ENCODE measurements at regions of chr16 and their contacts with region 1.

Region 1: GRCh38 chr16:84065536-84066132 is 23.0 kb upstream of the SLC38A8 start:
- DNase-seq: peak; percentile 62 to 70
- H3K4me3 ChIP-seq: no peak overlapping the region
- H3K4me3 Mint-ChIP-seq: no peak overlapping the region
- H3K27ac Mint-ChIP-seq: no peak overlapping the region
- H3K4me1 ChIP-seq: 0 out of 2 replicates have a peak, but pooled peaks cover 7% of the 10 kb centered on the region
- H3K4me1 Mint-ChIP-seq: no peaks in the 10 kb centered on the region
- H3K27me3 ChIP-seq: no peaks in the 10 kb centered on the region
- H3K27me3 Mint-ChIP-seq: no peaks in the 10 kb centered on the region
- CTCF ChIP-seq: peak; percentile 84 to 86

Region 2: DNA sequence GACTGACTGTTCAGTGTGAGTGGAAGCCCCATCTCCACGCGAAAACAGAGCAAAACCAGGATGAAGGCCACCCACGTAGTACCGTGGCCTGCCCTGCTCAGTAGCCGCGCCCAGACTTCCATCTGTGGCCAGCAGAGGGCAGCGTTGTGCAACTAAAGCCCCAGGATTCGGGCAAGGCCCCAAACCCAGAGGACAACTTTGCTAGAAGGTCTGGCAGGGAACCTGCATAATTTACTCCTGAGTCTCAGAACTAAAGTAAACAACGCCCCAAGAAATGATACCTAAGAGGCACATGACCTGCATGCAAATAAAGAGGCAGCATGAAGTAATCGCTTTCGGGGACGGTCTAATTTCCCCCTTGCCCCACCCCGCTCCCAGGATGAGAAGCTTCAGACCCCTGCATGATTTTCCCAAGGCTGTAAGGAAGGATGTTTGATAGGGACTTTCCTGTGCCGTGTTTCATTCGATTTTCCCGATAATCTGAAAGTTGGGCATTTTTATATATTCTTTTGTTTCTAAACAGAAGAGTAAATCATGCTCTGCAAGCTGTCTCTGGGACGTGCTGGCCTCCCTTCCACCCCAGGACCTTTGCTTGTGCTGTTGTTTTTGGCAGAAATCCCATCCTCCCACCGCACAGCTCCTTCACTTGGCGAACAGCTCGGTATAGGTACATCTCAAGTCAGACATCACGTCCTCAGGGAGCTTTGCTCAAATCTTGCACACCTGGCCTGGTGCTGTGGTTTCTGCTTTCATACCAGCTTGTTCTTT is 239.3 kb before region 1 on chr16:
- CTCF ChIA-PET with region 1: no interaction called
- POLR2A ChIA-PET with region 1: no interaction called
- intact Hi-C with region 1: loop called (anchors 5 kb)
- DNase-seq: peak; percentile 79 to 88
- H3K4me3 ChIP-seq: no peak overlapping the region
- H3K4me3 Mint-ChIP-seq: no peak overlapping the region
- H3K27ac Mint-ChIP-seq: no peak overlapping the region
- H3K4me1 ChIP-seq: no peaks in the 10 kb centered on the region
- H3K4me1 Mint-ChIP-seq: peaks cover 6% of the 10 kb centered on the region
- H3K27me3 ChIP-seq: no peaks in the 10 kb centered on the region
- H3K27me3 Mint-ChIP-seq: no peaks in the 10 kb centered on the region
- CTCF ChIP-seq: peak; percentile 96 to 98

Region 3: DNA sequence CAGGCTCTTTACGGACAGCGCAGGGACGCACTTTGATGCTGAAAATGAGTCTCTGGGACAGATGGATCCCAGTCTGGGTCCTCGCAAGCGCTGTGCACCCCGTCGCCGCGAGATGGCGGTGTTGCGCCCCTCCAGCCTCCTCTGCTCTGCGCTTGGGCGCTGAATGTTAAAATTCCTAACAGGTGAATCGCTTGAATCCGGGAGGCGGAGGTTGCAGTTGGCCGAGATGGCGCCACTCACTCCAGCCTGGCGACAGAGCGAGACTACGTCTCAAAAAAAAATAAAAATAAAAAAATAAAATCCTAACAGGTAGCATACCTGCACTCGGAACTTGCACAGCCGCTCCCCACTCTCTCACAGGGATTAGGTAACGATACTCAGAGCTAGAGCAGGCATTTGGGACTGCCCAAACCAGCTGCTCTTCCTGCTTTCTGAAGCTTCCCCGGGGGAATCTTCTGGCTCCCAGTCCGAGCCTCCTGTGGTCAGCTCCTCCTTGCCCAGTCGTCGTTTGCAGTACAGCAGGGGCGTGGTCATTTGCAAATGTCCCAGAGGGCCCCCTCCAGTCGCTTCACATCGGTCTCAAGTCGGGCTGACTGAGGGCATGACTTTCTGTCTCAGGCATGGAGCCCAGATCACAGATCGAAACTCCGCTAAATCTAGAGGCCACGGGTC is 138.8 kb before region 1 on chr16:
- CTCF ChIA-PET with region 1: interaction called, 4 read pairs
- POLR2A ChIA-PET with region 1: no interaction called
- intact Hi-C with region 1: loop called (anchors 1 kb)
- DNase-seq: peak; percentile 90 to 95
- H3K4me3 ChIP-seq: peak overlapping the region; percentile 43
- H3K4me3 Mint-ChIP-seq: peak overlapping the region; percentile 79
- H3K27ac Mint-ChIP-seq: peak overlapping the region; percentile 95
- H3K4me1 ChIP-seq: peaks cover 36% of the 10 kb centered on the region
- H3K4me1 Mint-ChIP-seq: peaks cover 26% of the 10 kb centered on the region
- H3K27me3 ChIP-seq: no peaks in the 10 kb centered on the region
- H3K27me3 Mint-ChIP-seq: no peaks in the 10 kb centered on the region
- CTCF ChIP-seq: peak; percentile 94 to 98

Region 4: DNA sequence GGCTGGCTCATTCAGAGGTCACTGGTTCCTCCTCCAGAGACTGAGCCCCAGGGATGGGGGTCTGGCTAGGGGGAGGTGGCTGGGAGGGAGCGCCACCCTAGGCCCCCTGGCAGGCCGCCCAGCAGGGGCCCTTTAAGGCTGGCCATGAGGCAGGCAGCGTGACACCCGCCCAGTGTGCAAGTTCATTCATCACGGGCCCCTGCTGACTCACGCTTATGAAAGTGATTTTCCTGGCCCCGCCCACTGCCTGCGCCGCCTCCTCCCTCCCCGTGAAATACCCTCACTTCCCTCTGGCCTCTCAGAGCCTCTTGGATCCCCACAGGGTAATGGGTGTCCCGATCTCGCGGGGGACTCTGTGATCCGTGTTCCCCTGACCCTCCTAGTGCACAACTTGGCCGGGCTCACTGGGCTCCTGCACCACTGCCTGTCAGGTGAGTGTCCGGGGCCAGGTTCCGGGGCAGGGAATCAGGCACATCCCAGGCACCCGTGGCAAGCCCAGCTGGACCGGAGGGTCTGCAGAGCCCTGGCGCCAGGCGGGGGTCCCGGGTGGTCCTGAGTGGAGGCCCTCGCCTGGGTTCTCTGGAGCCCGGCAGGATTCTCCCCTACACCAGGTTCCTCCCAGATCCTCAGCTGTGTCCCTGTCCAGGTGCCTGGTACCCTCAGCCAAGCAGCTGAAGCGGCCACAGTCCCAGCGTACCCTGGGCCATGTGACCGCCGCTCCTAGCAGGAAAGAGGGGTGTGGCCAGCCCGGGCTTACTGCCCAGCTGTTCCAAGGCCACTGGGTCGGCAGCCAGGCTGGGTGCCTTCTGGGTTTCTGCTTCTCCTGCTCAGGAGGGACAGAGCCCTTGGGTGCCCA is 112.5 kb before region 1 on chr16 and contains the start of gene OSGIN1:
- CTCF ChIA-PET with region 1: interaction called, 17 read pairs
- POLR2A ChIA-PET with region 1: no interaction called
- intact Hi-C with region 1: loop called (anchors 1 kb)
- DNase-seq: peak; percentile 92
- H3K4me3 ChIP-seq: peak within 1 kb of the TSS; percentile 68
- H3K4me3 Mint-ChIP-seq: peak within 1 kb of the TSS; percentile 94
- H3K27ac Mint-ChIP-seq: peak within 1 kb of the TSS; percentile 94
- H3K4me1 ChIP-seq: peaks cover 22% of the 10 kb centered on the region
- H3K4me1 Mint-ChIP-seq: peaks cover 12% of the 10 kb centered on the region
- H3K27me3 ChIP-seq: no peaks in the 10 kb centered on the region
- H3K27me3 Mint-ChIP-seq: no peaks in the 10 kb centered on the region
- CTCF ChIP-seq: no peak
- total RNA-seq, gene OSGIN1: 18.6 and 21.8 TPM in 2 replicates

Region 5: GRCh38 chr16:83967806-83968305 is 97.8 kb before region 1 on chr16 and contains the start of gene NECAB2:
- CTCF ChIA-PET with region 1: interaction called, 3 read pairs
- POLR2A ChIA-PET with region 1: no interaction called
- intact Hi-C with region 1: loop called (anchors 1 kb)
- DNase-seq: peak in 1 of 2 experiments; percentile 81
- H3K4me3 ChIP-seq: peak within 1 kb of the TSS; percentile 41
- H3K4me3 Mint-ChIP-seq: peak within 1 kb of the TSS; percentile 83
- H3K27ac Mint-ChIP-seq: peak within 1 kb of the TSS; percentile 30
- H3K4me1 ChIP-seq: no peaks in the 10 kb centered on the region
- H3K4me1 Mint-ChIP-seq: no peaks in the 10 kb centered on the region
- H3K27me3 ChIP-seq: no peaks in the 10 kb centered on the region
- H3K27me3 Mint-ChIP-seq: peaks cover 4% of the 10 kb centered on the region
- CTCF ChIP-seq: peak; percentile 71 to 76
- total RNA-seq, gene NECAB2: 0.68 and 0.79 TPM in 2 replicates

Region 6: DNA sequence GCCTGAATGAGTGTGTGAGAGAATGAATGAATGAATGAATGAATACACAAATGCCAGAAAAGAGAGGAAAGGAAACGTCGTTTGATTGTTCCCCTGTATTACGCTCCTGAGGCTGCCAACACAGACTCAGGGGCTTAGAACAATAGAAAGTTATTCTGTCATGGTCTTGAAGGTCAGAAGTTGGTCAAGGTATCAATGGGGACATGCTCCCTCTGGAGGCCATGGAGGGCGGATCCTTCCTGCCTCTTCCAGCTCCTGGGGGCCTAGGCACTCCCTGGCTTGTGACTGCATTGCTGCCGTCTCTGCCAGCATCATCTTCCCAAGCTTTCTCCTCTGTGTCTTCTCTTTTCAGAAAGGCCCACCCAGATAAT is 21.5 kb before region 1 on chr16:
- CTCF ChIA-PET with region 1: interaction called, 3 read pairs
- POLR2A ChIA-PET with region 1: no interaction called
- intact Hi-C with region 1: loop called (anchors 1 kb)
- DNase-seq: peak; percentile 65 to 69
- H3K4me3 ChIP-seq: no peak overlapping the region
- H3K4me3 Mint-ChIP-seq: peak overlapping the region; percentile 71
- H3K27ac Mint-ChIP-seq: no peak overlapping the region
- H3K4me1 ChIP-seq: peaks cover 30% of the 10 kb centered on the region
- H3K4me1 Mint-ChIP-seq: peaks cover 17% of the 10 kb centered on the region
- H3K27me3 ChIP-seq: no peaks in the 10 kb centered on the region
- H3K27me3 Mint-ChIP-seq: peaks cover 2% of the 10 kb centered on the region
- CTCF ChIP-seq: peak; percentile 43 to 65